Heart left ventricle (tissue), 16 donors: ENCODE measurements at regions of chr19 and their contacts with region 1.

Region 1: DNA sequence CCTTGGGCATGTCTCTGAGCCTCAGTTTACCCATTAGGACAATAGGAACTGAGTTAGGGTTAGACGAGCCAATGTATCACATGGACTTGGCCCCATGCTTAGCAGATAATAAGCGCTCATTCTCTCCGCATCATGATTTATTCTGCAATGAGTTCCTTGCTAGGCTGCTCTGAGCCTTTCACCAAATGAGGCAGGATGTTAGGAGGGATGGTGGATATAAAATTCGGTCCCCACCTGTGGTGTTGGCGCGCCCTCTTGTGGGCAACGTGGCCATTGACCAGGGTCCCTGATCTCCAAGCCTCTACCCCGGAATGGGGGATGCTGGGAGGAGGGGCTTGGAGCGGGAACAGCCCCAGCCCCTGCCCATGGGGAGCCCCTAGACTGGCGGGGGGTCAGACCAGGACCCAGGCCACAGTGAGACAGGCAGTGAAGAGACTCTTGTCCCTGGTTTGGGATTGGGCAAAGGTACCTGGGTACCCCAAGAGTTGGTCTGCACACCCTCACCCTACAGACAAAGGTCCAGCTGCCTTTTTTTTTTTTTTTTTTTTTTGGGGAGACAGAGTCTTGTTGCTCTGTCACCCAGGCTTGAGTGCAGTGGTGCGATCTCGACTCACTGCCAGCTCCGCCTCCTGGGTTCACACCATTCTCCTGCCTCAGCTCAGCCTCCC is 43.9 kb downstream of the CERS4 start:
- DNase-seq: peak; percentile 75 to 92 (median 81)
- ATAC-seq: peak in 3 of 4 donors; percentile 57 to 60 (median 59)
- H3K4me3 ChIP-seq: no peak overlapping the region
- H3K27ac ChIP-seq: no peak overlapping the region
- H3K4me1 ChIP-seq: peaks cover 0 to 18% (median 5%) of the 10 kb centered on the region in 12 donors
- H3K27me3 ChIP-seq: no peaks in the 10 kb centered on the region
- CTCF ChIP-seq: peak; percentile 90 to 98 (median 94)
- POLR2A ChIP-seq: no peak

Region 2: GRCh38 chr19:7852851-7853769 is 399.9 kb before region 1 on chr19:
- intact Hi-C with region 1: loop called in 1 of 10 experiments (anchors 10 kb)
- DNase-seq: peak in 4 of 5 donors; percentile 49 to 64 (median 54)
- ATAC-seq: peak; percentile 30 to 66 (median 56)
- H3K4me3 ChIP-seq: no peak overlapping the region
- H3K27ac ChIP-seq: no peak overlapping the region
- H3K4me1 ChIP-seq: peaks cover 0 to 21% (median 4%) of the 10 kb centered on the region in 12 donors
- H3K27me3 ChIP-seq: no peaks in the 10 kb centered on the region
- CTCF ChIP-seq: peak; percentile 68 to 92 (median 77)
- POLR2A ChIP-seq: no peak

Region 3: DNA sequence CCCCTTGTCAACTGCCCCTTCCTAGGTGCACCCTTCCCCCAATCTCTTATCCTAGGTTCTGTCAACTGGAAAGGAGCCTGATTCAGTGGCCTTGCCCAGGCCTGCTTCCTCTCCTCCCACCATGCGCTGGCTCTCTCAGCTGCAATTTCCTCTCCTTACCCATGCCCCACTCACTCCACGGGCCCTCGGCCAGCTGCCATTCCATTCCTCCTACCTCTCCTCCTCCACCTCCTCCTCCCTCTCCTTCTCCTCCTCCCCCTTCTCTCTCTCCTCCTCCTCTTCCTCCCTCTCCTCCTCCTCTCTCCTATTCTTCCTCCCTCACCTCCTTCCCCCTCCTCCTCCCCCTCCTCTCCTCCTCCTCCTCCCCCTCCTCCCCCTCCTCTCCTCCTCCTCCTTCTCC is 300.0 kb before region 1 on chr19:
- intact Hi-C with region 1: loop called in 2 of 10 experiments (anchors 5 kb)
- DNase-seq: peak in 1 of 5 donors; percentile 20
- ATAC-seq: no peak
- H3K4me3 ChIP-seq: no peak overlapping the region
- H3K27ac ChIP-seq: no peak overlapping the region
- H3K4me1 ChIP-seq: peaks cover 0 to 12% (median 5%) of the 10 kb centered on the region in 12 donors
- H3K27me3 ChIP-seq: no peaks in the 10 kb centered on the region
- CTCF ChIP-seq: no peak
- POLR2A ChIP-seq: no peak

Region 4: DNA sequence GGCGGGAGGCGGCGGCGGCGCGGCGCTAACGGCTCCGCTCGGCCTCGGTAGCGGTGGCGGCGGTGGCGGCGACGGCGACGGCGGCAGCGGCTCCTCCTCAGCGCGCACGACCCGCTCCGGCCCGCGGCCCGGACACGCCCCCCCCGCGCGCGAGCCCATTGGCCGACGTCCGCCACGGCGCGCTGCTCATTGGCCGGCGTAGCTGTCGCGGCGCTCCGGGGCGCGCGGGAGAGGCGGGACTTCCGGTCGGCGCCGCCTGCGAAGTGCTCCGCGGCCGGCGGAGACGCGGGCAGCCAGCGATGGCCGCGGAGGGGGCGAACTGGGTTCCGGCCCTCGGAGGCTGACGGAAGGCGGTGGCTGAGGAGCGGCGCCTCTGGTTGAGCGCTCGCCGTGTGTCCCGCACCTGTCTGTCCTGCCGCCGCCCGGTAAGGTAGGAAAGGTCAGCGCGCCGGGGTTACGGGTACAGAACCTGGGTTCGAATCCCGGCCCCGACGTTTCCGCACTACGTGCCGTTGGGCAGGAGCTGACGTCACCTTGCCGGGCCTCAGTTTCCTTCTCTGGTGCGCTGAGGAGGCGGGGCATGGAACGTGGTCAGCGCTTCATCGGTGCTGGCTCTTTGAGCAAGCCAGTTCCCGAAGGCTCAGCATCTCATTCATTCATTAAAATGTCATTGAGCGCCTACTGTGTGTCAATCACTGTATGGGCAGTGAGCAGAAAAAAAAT is 247.4 kb before region 1 on chr19 and contains the start of gene ELAVL1:
- intact Hi-C with region 1: loop called in 6 of 10 experiments (anchors 10 kb)
- DNase-seq: peak; percentile 91 to 96 (median 92)
- ATAC-seq: peak; percentile 80 to 94 (median 92)
- H3K4me3 ChIP-seq: peak within 1 kb of the TSS; percentile 59 to 99 (median 83)
- H3K27ac ChIP-seq: peak within 1 kb of the TSS; percentile 53 to 88 (median 84)
- H3K4me1 ChIP-seq: peaks cover 6 to 52% (median 45%) of the 10 kb centered on the region in 12 donors
- H3K27me3 ChIP-seq: no peaks in the 10 kb centered on the region
- CTCF ChIP-seq: peak in 1 of 12 donors; percentile 11
- POLR2A ChIP-seq: peak in 1 of 2 donors; percentile 67
- total RNA-seq, gene ELAVL1: 31.4 to 62.0 (median 53.4) TPM

Region 5: DNA sequence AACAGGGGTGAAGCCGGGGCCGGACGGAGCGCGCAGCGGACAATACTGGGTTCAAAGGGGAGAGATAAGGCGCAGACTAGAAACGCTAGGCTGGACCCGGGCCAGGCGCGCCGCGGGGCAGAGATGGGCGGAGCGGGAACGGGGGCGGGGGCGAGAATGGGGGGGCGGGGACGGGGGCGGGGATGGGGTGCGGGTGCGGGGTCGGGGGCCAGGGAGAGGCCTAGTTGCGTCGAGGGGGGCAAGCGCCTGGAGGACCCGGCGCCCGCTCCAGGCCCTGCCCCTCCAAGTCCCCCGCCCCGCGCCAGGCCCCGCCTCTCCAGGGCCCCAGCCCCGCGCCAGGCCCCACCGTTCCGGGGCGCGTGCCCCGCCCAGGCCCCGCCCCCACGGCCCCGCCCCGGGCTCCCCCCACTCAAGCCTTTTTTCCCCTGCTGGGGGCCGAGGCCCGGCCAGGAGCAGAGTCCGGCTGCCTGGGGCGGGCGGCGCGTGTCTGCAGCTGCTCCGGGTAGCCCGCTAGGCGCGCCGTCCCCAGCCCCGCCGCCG is 44.1 kb before region 1 on chr19 and contains the start of gene CERS4:
- intact Hi-C with region 1: loop called in 4 of 10 experiments (anchors 1 to 5 kb)
- DNase-seq: peak; percentile 78 to 90 (median 79)
- ATAC-seq: peak; percentile 73 to 96 (median 88)
- H3K4me3 ChIP-seq: peak within 1 kb of the TSS; percentile 55 to 99 (median 82)
- H3K27ac ChIP-seq: peak within 1 kb of the TSS; percentile 40 to 90 (median 78)
- H3K4me1 ChIP-seq: peaks cover 0 to 27% (median 9%) of the 10 kb centered on the region in 12 donors
- H3K27me3 ChIP-seq: peaks cover 0 to 8% (median 0%) of the 10 kb centered on the region in 9 donors
- CTCF ChIP-seq: no peak
- POLR2A ChIP-seq: no peak
- total RNA-seq, gene CERS4: 13.6 to 25.6 (median 20.6) TPM